ENCODE measurements at regions of chr2 and their contacts with region 1.

Region 1: DNA sequence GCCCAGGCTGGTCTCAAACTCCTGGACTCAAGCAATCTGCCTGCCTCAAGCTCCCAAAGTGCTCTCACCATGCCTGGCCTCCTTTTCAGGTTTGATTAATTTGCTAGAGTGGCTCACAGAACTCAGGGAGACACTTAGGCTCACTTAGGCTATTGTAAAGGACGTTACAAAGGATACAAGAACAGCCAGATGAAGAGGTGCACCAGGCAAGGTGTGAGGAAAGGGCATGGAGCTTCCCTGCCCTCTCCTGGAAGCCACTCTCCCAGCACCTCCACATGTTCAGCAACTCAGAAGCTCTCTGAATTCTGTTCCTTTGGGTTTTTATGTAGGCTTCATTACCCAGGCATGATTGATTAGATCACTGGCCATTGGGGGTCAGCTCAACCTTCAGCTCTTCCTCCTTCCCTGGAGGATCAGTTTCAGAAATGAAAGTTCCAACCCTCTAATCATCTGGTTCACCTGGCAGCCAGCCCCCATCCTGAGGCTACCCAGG is 78.7 kb upstream of the RGPD5 start:
- DNase-seq: no peak
- H3K4me3 ChIP-seq: no peak overlapping the region
- H3K27ac ChIP-seq: no peak overlapping the region
- H3K4me1 ChIP-seq: no peaks in the 10 kb centered on the region
- H3K27me3 ChIP-seq: peaks cover 2 to 5% of the 10 kb centered on the region in 2 experiments
- CTCF ChIP-seq: peak in 1 of 2 donors; percentile 23
- POLR2A ChIP-seq: no peak

Region 2: GRCh38 chr2:109516445-109517117 is 198.8 kb before region 1 on chr2:
- CTCF ChIA-PET with region 1: interaction called, 3 read pairs
- POLR2A ChIA-PET with region 1: no interaction called
- dilution Hi-C with region 1: no loop called
- intact Hi-C with region 1: loop called (anchors 2 kb)
- DNase-seq: peak; percentile 60
- H3K4me3 ChIP-seq: no peak overlapping the region
- H3K27ac ChIP-seq: no peak overlapping the region
- H3K4me1 ChIP-seq: no peaks in the 10 kb centered on the region
- H3K27me3 ChIP-seq: no peaks in the 10 kb centered on the region
- CTCF ChIP-seq: peak; percentile 84 to 95
- POLR2A ChIP-seq: no peak

Measured in endothelial cell of umbilical vein (primary cell).